ENCODE measurements at regions of chr15 and their contacts with region 1.

Region 1: DNA sequence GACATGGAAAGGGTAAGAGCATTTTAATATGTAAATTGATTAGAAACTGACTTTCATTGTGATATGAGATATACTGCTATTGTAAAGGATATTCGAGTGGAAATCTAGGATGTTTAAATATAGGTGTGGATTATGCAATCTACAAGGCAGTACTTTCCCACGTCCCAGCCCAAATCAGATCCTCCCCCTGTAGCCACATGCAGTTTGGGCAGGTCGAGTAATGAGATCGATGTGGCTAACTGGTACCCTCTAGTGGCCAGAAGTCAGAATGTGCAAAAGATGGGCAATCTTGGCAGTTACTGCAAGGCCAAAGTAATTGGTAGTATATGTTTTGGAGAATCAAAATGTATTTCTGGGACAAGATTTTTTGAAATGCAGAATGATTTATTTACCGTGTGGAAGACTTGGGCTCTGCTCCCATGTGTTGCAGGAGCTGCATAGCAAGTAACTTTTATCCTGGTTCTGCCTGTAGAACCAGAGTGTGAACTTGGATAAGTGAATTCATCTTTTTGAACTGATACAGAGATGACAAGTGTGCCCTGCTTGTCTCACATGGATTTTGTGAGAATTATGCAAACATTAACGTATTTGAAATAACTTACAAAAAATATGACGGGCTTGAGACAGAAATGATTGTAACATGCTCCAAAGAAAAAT is 94.5 kb upstream of the ADAMTSL3 start:
- DNase-seq: peak; percentile 44 to 74 (median 56)
- H3K4me3 ChIP-seq: no peak overlapping the region
- H3K27ac ChIP-seq: no peak overlapping the region
- H3K4me1 ChIP-seq: peaks cover 0 to 3% of the 10 kb centered on the region in 2 donors
- H3K27me3 ChIP-seq: no peaks in the 10 kb centered on the region
- CTCF ChIP-seq: peak; percentile 58 to 82 (median 75)
- POLR2A ChIP-seq: no peak

Region 2: DNA sequence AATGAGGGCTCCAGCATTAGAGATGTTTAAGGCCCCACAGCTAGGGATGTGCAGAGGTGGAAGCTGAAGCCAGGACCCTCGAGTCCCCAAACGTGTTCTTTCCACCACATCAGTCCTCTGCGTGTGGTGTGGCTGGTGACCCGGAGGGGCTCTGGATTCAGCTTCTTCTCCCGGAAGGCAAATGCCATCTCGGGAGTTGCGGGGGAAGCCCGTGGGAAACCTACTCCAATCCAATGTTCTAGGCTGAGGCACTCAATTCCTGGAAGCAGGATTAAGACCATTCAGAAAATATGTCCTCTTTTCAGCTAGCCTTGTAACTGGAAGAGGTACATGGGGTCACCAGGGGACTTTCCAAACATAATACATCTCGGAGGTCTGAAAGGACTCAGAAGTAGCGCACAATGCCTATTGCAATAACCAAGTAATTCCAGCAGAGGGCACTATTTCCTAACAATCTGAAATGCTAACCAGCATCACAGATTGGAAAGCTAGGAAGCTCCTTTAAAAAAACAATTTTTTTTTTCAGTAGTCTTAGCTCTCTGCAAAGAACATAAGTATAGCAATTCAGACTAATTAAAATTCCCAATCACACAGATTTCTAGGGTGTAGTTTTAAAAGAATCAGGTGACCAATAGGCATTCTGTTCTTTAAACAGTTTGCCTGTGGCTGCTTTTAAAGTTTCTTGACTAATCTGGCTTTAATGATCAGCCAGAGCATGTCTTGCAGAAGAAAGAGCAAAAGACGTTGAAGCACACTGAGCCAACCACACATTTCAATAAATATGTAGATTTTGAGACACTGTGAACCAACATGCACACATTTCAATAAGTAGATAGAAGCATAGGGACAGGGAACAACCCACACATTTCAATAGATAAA is 311.0 kb before region 1 on chr15:
- intact Hi-C with region 1: loop called in 1 of 2 experiments (anchors 5 kb)
- DNase-seq: peak in 4 of 7 donors; percentile 10 to 37 (median 24)
- H3K4me3 ChIP-seq: no peak overlapping the region
- H3K27ac ChIP-seq: no peak overlapping the region
- H3K4me1 ChIP-seq: peaks cover 0 to 3% of the 10 kb centered on the region in 2 donors
- H3K27me3 ChIP-seq: peaks cover 18% of the 10 kb centered on the region
- CTCF ChIP-seq: peak; percentile 79 to 97 (median 84)
- POLR2A ChIP-seq: no peak

Region 3: GRCh38 chr15:83436458-83437158 is 122.8 kb before region 1 on chr15:
- intact Hi-C with region 1: loop called (anchors 5 to 10 kb)
- DNase-seq: no peak
- H3K4me3 ChIP-seq: no peak overlapping the region
- H3K27ac ChIP-seq: no peak overlapping the region
- H3K4me1 ChIP-seq: no peaks in the 10 kb centered on the region
- H3K27me3 ChIP-seq: no peaks in the 10 kb centered on the region
- CTCF ChIP-seq: peak in 3 of 6 experiments; percentile 6 to 27 (median 17)
- POLR2A ChIP-seq: no peak

Region 4: DNA sequence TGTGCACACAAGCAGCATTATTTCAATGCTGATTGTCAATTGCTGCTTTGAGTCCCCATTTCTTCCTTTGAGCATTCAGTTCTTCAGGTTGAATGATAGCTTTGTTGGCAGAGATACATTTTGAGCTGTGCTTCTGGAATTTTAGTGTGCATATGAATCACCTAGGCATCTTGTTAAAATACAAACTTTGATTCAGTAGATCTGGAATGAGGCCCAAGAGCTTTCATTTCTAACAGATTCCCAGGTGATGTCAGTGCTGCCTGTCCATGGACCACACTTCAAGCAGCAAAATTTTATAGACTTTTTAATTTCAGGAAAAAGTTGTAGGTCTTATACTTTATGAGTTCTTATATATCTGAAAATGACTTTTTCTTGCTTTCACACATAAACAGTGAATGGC is 225.5 kb after region 1 on chr15:
- intact Hi-C with region 1: no loop called
- DNase-seq: no peak
- H3K4me3 ChIP-seq: no peak overlapping the region
- H3K27ac ChIP-seq: no peak overlapping the region
- H3K4me1 ChIP-seq: no peaks in the 10 kb centered on the region
- H3K27me3 ChIP-seq: no peaks in the 10 kb centered on the region
- CTCF ChIP-seq: no peak
- POLR2A ChIP-seq: no peak